ENCODE measurements at regions of chr4 and their contacts with region 1.

Region 1: GRCh38 chr4:1579901-1580691 is 104.0 kb downstream of the FAM53A start:
- DNase-seq: peak; percentile 89
- ATAC-seq: peak; percentile 83
- H3K4me3 Mint-ChIP-seq: peak overlapping the region; percentile 81
- H3K27ac Mint-ChIP-seq: peak overlapping the region; percentile 79
- H3K4me1 Mint-ChIP-seq: peaks cover 4% of the 10 kb centered on the region
- H3K27me3 Mint-ChIP-seq: no peaks in the 10 kb centered on the region
- CTCF ChIP-seq: no peak

Region 2: GRCh38 chr4:124275-125081 is 1455.6 kb before region 1 on chr4 and contains the start of gene ZNF718:
- CTCF ChIA-PET with region 1: no interaction called
- POLR2A ChIA-PET with region 1: no interaction called
- intact Hi-C with region 1: loop called (anchors 5 kb)
- DNase-seq: peak; percentile 80
- ATAC-seq: peak; percentile 97
- H3K4me3 Mint-ChIP-seq: peak within 1 kb of the TSS; percentile 100
- H3K27ac Mint-ChIP-seq: peak within 1 kb of the TSS; percentile 99
- H3K4me1 Mint-ChIP-seq: peaks cover 32% of the 10 kb centered on the region
- H3K27me3 Mint-ChIP-seq: no peaks in the 10 kb centered on the region
- CTCF ChIP-seq: no peak
- total RNA-seq, gene ZNF718: 9.3 and 10.9 TPM in 2 replicates

Region 3: GRCh38 chr4:781493-782216 is 798.4 kb before region 1 on chr4:
- CTCF ChIA-PET with region 1: no interaction called
- POLR2A ChIA-PET with region 1: no interaction called
- intact Hi-C with region 1: loop called (anchors 5 kb)
- DNase-seq: peak; percentile 97
- ATAC-seq: peak; percentile 93
- H3K4me3 Mint-ChIP-seq: peak overlapping the region; percentile 91
- H3K27ac Mint-ChIP-seq: peak overlapping the region; percentile 87
- H3K4me1 Mint-ChIP-seq: peaks cover 47% of the 10 kb centered on the region
- H3K27me3 Mint-ChIP-seq: peaks cover 18% of the 10 kb centered on the region
- CTCF ChIP-seq: no peak

Region 4: GRCh38 chr4:1683736-1684505 is 103.8 kb after region 1 on chr4 and contains the start of gene FAM53A:
- CTCF ChIA-PET with region 1: no interaction called
- POLR2A ChIA-PET with region 1: no interaction called
- intact Hi-C with region 1: loop called (anchors 1 kb)
- DNase-seq: peak; percentile 99
- ATAC-seq: peak; percentile 95
- H3K4me3 Mint-ChIP-seq: peak within 1 kb of the TSS; percentile 86
- H3K27ac Mint-ChIP-seq: peak within 1 kb of the TSS; percentile 69
- H3K4me1 Mint-ChIP-seq: peaks cover 10% of the 10 kb centered on the region
- H3K27me3 Mint-ChIP-seq: no peaks in the 10 kb centered on the region
- CTCF ChIP-seq: no peak
- total RNA-seq, gene FAM53A: 0.81 and 1.2 TPM in 2 replicates

Region 5: GRCh38 chr4:1721004-1721665 is 141.0 kb after region 1 on chr4 and contains the starts of genes TACC3 and TMEM129:
- CTCF ChIA-PET with region 1: no interaction called
- POLR2A ChIA-PET with region 1: interaction called, 5 read pairs
- intact Hi-C with region 1: loop called (anchors 2 kb)
- DNase-seq: peak; percentile 87
- ATAC-seq: peak; percentile 83
- H3K4me3 Mint-ChIP-seq: peak within 1 kb of the TSS; percentile 89
- H3K27ac Mint-ChIP-seq: peak within 1 kb of the TSS; percentile 92
- H3K4me1 Mint-ChIP-seq: peaks cover 64% of the 10 kb centered on the region
- H3K27me3 Mint-ChIP-seq: no peaks in the 10 kb centered on the region
- CTCF ChIP-seq: no peak
- total RNA-seq, gene TACC3: 16.1 and 20.5 TPM in 2 replicates
- total RNA-seq, gene TMEM129: 23.6 and 23.7 TPM in 2 replicates

Region 6: GRCh38 chr4:2241410-2242353 is 661.6 kb after region 1 on chr4 and contains the starts of genes HAUS3 and POLN:
- CTCF ChIA-PET with region 1: no interaction called
- POLR2A ChIA-PET with region 1: no interaction called
- intact Hi-C with region 1: loop called (anchors 10 kb)
- DNase-seq: peak; percentile 99
- ATAC-seq: peak; percentile 96
- H3K4me3 Mint-ChIP-seq: peak within 1 kb of the TSS; percentile 91
- H3K27ac Mint-ChIP-seq: peak within 1 kb of the TSS; percentile 86
- H3K4me1 Mint-ChIP-seq: peaks cover 54% of the 10 kb centered on the region
- H3K27me3 Mint-ChIP-seq: no peaks in the 10 kb centered on the region
- CTCF ChIP-seq: no peak
- total RNA-seq, gene HAUS3: 17.9 and 19.0 TPM in 2 replicates
- total RNA-seq, gene POLN: 1.4 and 1.7 TPM in 2 replicates

Region 7: GRCh38 chr4:2436301-2436700 is 856.2 kb after region 1 on chr4:
- CTCF ChIA-PET with region 1: no interaction called
- POLR2A ChIA-PET with region 1: no interaction called
- intact Hi-C with region 1: no loop called
- DNase-seq: no peak
- ATAC-seq: no peak
- H3K4me3 Mint-ChIP-seq: no peak overlapping the region
- H3K27ac Mint-ChIP-seq: no peak overlapping the region
- H3K4me1 Mint-ChIP-seq: no peaks in the 10 kb centered on the region
- H3K27me3 Mint-ChIP-seq: no peaks in the 10 kb centered on the region
- CTCF ChIP-seq: no peak

Measured in activated B cell treated with CpG ODN at 0.5 μM for 24 hours (primary cell).